ENCODE measurements at regions of chr6 and their contacts with region 1.

Region 1: GRCh38 chr6:42661540-42662153 is 60.8 kb downstream of the PRPH2 start:
- DNase-seq: peak; percentile 92

Region 2: GRCh38 chr6:42726485-42727086 is 64.9 kb after region 1 on chr6:
- intact Hi-C with region 1: loop called (anchors 5 to 10 kb)
- DNase-seq: peak; percentile 81

Measured in posterior vena cava (tissue), 2 donors.